Mucosa of descending colon (tissue), 3 donors: ENCODE measurements at regions of chr2 and their contacts with region 1.

Region 1: DNA sequence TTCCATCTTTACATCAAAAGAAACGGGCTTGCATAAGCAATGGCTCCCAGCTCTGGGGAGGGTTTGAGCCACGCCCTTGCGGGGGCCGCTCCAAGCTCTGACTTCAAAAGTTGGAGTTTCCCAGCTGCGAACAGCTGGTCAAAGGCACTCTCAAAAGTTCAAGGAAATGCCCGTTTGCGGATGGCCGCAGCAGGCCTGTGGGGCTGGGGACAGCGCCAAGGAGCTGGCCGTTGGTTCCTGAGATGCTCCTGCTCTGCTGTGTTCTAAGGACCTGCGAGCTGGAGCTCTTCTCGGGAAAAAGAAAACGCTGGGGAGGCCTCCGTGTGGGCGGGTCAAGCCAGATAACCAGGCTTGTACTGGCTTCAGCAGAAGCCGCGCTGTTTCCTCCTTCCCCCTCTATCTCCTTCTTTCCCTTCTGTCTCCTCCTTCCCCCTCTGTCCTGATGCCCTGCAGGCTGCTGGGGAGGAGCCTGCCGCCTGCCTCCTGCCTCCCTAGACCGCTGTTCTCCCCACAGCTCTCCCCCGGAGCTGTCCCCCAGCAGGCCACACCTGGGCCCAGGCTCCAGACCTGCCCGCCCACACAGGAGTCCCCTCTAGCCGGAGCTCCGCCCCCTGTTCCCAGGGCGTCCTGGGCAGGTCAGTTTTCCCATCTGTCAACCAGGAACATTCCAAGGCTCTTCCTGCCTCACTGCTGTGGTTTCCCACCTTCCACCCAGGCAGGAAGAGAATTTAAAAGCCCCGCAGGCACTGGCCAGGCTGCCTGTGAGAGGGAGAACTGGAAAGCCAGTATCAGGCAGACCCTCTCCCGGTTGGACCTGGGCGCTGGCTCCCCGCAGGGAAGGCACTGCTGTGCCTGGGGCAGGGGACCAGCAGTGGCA is 14.1 kb downstream of the KLF11 start:
- DNase-seq: peak; percentile 69 to 84 (median 74)
- ATAC-seq: peak; percentile 88
- H3K4me3 ChIP-seq: no peak overlapping the region
- H3K4me1 ChIP-seq: peaks cover 12% of the 10 kb centered on the region
- CTCF ChIP-seq: no peak

Region 2: DNA sequence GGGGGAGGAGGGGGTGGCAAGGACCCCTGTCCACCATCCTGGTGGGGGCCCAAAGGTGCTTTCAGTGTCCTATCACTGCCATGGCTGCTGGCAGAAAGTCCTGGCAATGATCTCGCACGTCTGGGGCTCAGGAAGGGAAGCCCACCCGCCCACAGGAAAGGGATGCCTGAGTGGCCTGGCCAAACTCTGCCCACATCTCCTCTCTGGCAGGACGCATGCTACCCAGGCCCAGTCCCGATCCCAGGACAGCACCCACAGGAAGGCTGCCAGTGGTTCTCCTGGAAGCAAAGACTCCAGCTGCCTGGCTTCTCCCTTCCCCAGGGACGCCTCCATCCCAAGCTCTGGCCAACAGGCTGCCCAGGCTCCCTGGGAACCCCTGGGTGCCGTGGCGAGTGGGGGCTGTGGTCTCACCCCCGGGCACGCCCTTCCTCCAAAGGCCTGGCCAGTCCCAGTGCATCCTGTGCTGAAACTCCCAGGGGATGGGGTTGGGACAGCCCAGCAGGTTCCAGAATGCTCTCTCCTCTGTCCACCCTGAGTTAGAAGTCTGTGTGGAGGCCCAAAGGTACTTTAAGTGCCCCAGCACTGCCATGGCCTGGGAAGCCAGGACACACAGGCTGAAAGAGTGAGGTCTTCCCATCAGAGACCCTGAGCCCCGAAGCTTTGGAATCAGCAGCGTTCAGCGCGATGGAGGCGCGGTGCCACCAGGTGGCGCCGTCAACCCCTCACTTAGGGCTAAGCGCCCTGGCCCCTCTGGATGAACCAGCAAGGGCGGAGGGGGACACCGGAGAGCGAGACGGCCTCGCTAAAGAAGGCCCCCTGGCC is 243.9 kb before region 1 on chr2:
- intact Hi-C with region 1: loop called (anchors 5 to 10 kb)
- DNase-seq: peak in 2 of 3 donors; percentile 81 to 85
- ATAC-seq: peak; percentile 73
- H3K4me3 ChIP-seq: no peak overlapping the region
- H3K4me1 ChIP-seq: peaks cover 12% of the 10 kb centered on the region
- CTCF ChIP-seq: peak; percentile 88

Region 3: GRCh38 chr2:10003206-10004125 is 54.0 kb before region 1 on chr2:
- intact Hi-C with region 1: no loop called
- DNase-seq: peak in 1 of 3 donors; percentile 11
- ATAC-seq: no peak
- H3K4me3 ChIP-seq: no peak overlapping the region
- H3K4me1 ChIP-seq: no peaks in the 10 kb centered on the region
- CTCF ChIP-seq: no peak

Region 4: GRCh38 chr2:10344105-10345066 is 286.9 kb after region 1 on chr2:
- intact Hi-C with region 1: no loop called
- DNase-seq: no peak
- ATAC-seq: no peak
- H3K4me3 ChIP-seq: no peak overlapping the region
- H3K4me1 ChIP-seq: peaks cover 6% of the 10 kb centered on the region
- CTCF ChIP-seq: no peak